ENCODE measurements at regions of chr6 and their contacts with region 1.

Region 1: DNA sequence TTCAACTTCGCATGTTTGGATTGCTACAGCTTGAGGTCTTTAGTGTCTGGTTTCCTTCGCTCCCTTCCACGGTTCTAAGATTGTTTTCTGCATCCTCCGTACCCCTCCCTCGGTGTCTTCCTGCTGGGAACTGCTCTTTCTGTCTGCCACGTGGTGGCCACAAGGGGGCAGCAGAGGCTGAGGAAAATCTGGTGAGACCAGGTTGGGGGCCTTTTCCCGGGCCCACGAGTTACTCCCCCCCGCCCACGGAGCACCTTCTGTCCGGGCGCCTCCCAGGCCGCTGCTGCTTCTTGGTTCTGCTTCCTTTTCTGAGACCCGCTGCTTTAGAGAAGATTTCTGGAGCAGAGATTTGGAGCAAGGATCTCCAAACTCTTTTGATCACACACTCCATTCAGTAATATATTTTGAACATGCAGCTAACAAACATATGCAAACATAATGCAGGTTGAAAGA is 21.1 kb upstream of the NOTCH4 start:
- DNase-seq: peak; percentile 85
- H3K4me3 ChIP-seq: no peak overlapping the region
- H3K27ac ChIP-seq: no peak overlapping the region
- H3K4me1 ChIP-seq: peaks cover 3% of the 10 kb centered on the region
- H3K27me3 ChIP-seq: no peaks in the 10 kb centered on the region
- CTCF ChIP-seq: peak; percentile 72 to 89
- POLR2A ChIP-seq: no peak

Region 2: GRCh38 chr6:32118782-32119628 is 126.0 kb before region 1 on chr6:
- CTCF ChIA-PET with region 1: interaction called, 4 read pairs
- POLR2A ChIA-PET with region 1: no interaction called
- dilution Hi-C with region 1: no loop called
- intact Hi-C with region 1: loop called (anchors 2 kb)
- DNase-seq: peak; percentile 87
- H3K4me3 ChIP-seq: no peak overlapping the region
- H3K27ac ChIP-seq: no peak overlapping the region
- H3K4me1 ChIP-seq: no peaks in the 10 kb centered on the region
- H3K27me3 ChIP-seq: no peaks in the 10 kb centered on the region
- CTCF ChIP-seq: peak; percentile 92 to 96
- POLR2A ChIP-seq: no peak

Region 3: DNA sequence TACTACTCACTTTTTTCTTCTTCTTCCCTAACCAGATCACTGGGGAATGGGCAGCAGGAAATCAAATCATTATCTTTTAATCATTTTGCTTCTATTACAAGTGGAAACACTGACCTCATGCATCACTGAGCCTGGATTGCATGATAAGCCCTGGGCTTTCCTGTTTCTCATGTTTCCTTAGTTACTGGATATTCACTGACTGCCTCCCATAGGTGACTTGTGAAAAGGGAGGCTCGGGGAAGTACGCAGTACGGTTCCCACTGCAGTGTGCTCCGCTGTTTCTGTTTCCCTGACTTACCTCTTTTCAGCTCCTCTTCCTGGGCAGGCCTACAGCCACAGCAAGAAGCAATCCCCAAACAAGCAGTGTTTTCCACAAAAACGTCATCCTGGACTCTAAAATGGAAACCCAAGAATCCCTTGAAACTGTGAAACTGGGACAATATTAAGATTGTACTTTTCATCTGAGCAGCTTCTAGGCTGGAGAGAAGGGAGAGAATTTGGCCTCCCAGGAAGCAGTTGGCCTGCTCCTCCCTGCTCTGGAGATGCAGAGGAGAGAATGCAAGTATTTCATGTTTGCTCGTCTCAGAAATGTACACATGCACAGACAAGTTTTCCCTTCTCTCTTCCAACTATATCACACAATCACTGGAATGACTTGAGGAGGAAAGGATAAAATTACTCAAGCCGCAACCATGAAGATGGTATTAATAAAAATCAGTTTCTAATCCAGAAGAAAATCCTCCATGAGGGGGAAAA is 148.9 kb after region 1 on chr6:
- CTCF ChIA-PET with region 1: interaction called, 10 read pairs
- POLR2A ChIA-PET with region 1: no interaction called
- dilution Hi-C with region 1: no loop called
- intact Hi-C with region 1: no loop called
- DNase-seq: peak; percentile 99
- H3K4me3 ChIP-seq: no peak overlapping the region
- H3K27ac ChIP-seq: peak overlapping the region; percentile 86
- H3K4me1 ChIP-seq: peaks cover 13% of the 10 kb centered on the region
- H3K27me3 ChIP-seq: no peaks in the 10 kb centered on the region
- CTCF ChIP-seq: no peak
- POLR2A ChIP-seq: no peak

Region 4: GRCh38 chr6:32413427-32414047 is 168.6 kb after region 1 on chr6:
- CTCF ChIA-PET with region 1: interaction called, 50 read pairs
- POLR2A ChIA-PET with region 1: no interaction called
- dilution Hi-C with region 1: loop called (anchors 25 kb)
- intact Hi-C with region 1: loop called (anchors 1 kb)
- DNase-seq: peak; percentile 84
- H3K4me3 ChIP-seq: no peak overlapping the region
- H3K27ac ChIP-seq: no peak overlapping the region
- H3K4me1 ChIP-seq: peaks cover 8% of the 10 kb centered on the region
- H3K27me3 ChIP-seq: peaks cover 15 to 26% of the 10 kb centered on the region in 2 experiments
- CTCF ChIP-seq: peak; percentile 79 to 94
- POLR2A ChIP-seq: no peak

Region 5: GRCh38 chr6:32700391-32701040 is 455.5 kb after region 1 on chr6:
- CTCF ChIA-PET with region 1: interaction called, 29 read pairs
- POLR2A ChIA-PET with region 1: no interaction called
- dilution Hi-C with region 1: no loop called
- intact Hi-C with region 1: loop called (anchors 1 kb)
- DNase-seq: peak; percentile 67
- H3K4me3 ChIP-seq: no peak overlapping the region
- H3K27ac ChIP-seq: no peak overlapping the region
- H3K4me1 ChIP-seq: peaks cover 6% of the 10 kb centered on the region
- H3K27me3 ChIP-seq: peaks cover 15 to 40% of the 10 kb centered on the region in 2 experiments
- CTCF ChIP-seq: peak; percentile 41 to 64
- POLR2A ChIP-seq: no peak

Region 6: DNA sequence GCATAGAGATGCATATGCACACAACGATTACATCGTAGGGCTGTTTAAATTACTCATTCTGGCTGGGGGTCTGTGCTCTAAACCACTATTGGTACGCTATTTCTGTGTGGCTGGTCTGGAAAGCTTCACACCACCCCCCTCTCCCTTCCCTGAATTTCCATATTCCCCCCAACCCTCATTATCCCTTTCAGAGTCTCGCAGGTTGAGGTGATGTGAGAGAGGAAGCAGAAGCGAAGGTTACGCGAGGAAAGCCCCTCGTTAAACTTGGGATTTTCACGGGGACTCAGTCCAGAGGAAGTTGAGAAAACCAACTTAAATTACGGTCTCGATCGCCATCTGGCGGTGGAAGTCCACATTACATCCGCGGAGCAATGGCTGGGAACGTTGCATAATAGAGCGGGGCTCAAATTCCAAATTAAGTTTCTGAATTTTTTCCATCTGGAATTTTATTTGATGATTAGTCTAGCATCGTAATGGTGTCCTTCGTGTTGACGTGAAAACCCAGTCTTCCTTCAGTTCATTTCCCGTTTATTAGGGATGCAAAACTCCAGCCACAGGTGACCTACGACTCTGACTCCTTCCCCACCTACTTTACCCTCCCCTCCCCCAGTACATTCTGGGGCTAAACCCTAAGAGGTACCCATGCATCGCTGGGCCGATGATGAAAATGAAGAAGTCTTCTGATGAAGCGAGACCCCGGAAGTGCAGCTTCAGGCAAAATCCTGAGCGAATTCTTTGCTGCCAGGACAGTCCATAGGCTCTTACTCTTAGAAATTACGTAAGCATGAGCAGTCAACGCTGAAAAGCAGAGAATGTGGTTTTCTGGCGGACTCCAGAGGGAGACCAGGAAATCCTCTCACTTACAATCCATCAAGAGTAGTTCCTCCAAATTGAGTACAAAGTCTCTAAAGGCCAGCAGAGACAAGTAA is 552.1 kb after region 1 on chr6:
- CTCF ChIA-PET with region 1: interaction called, 3 read pairs
- POLR2A ChIA-PET with region 1: no interaction called
- dilution Hi-C with region 1: no loop called
- intact Hi-C with region 1: loop called (anchors 1 kb)
- DNase-seq: peak; percentile 65
- H3K4me3 ChIP-seq: peak overlapping the region in 1 of 3 experiments; percentile 19
- H3K27ac ChIP-seq: no peak overlapping the region
- H3K4me1 ChIP-seq: no peaks in the 10 kb centered on the region
- H3K27me3 ChIP-seq: peaks cover 40 to 67% of the 10 kb centered on the region in 2 experiments
- CTCF ChIP-seq: peak; percentile 77 to 82
- POLR2A ChIP-seq: no peak